CD4-positive, alpha-beta T cell (primary cell): ENCODE measurements at regions of chr13 and their contacts with region 1.

Region 1: DNA sequence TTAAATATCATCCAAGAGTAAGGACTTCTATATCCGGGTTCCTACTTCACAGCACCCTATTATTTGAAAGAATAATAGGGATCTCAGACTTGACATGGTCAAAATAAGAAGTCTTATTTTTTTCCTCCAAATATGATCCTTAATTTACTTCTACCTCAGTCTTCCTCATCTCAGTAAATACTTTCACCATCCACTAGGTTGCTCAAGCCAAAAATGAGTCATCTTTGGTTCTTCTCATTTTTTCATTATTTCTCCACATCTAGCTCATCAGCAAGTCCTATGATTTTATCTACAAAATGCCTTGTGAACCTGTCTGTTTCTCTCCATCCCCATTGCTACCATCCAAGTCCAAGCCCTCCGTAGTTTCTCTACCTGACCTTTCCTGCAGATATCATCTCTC is 121.9 kb upstream of the GJB6 start:
- DNase-seq: peak in 2 of 14 experiments; percentile 28 to 43
- ATAC-seq: no peak
- H3K4me3 ChIP-seq: no peak overlapping the region
- H3K4me3 Mint-ChIP-seq: no peak overlapping the region
- H3K27ac ChIP-seq: no peak overlapping the region
- H3K27ac Mint-ChIP-seq: no peak overlapping the region
- H3K4me1 ChIP-seq: no peaks in the 10 kb centered on the region
- H3K4me1 Mint-ChIP-seq: peaks cover 5% of the 10 kb centered on the region
- H3K27me3 ChIP-seq: no peaks in the 10 kb centered on the region
- H3K27me3 Mint-ChIP-seq: no peaks in the 10 kb centered on the region
- CTCF ChIP-seq: no peak

Region 2: DNA sequence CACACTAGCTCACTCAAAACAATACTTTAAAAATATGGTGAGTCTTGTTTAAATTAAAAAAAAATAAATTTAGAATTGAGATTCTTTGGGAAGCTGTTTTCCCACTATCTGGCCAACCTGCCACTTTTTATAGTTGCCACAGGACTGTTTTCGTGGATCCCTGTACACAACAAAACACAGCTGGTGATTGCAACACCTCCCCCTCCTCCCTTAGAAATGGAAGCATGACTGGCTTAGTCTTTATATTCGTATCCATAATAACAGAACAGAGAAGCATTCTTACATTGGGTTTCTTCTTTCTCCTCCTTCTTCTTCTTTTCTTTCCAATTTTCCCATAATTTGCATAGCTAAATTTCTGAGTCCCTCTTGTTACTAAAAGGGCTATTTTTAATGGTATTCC is 42.4 kb before region 1 on chr13:
- CTCF ChIA-PET with region 1: no interaction called
- POLR2A ChIA-PET with region 1: no interaction called
- intact Hi-C with region 1: loop called in 1 of 2 experiments (anchors 5 kb)
- DNase-seq: no peak
- ATAC-seq: no peak
- H3K4me3 ChIP-seq: no peak overlapping the region
- H3K4me3 Mint-ChIP-seq: no peak overlapping the region
- H3K27ac ChIP-seq: no peak overlapping the region
- H3K27ac Mint-ChIP-seq: no peak overlapping the region
- H3K4me1 ChIP-seq: no peaks in the 10 kb centered on the region
- H3K4me1 Mint-ChIP-seq: no peaks in the 10 kb centered on the region
- H3K27me3 ChIP-seq: no peaks in the 10 kb centered on the region
- H3K27me3 Mint-ChIP-seq: no peaks in the 10 kb centered on the region
- CTCF ChIP-seq: no peak